GM12878 (cell line): ENCODE measurements at regions of chr3 and their contacts with region 1.

Region 1: GRCh38 chr3:107855708-107856107 is 235.1 kb downstream of the CD47 start:
- DNase-seq: no peak
- ATAC-seq: peak; percentile 97
- H3K4me3 ChIP-seq: no peak overlapping the region
- H3K27ac ChIP-seq: no peak overlapping the region
- H3K4me1 ChIP-seq: no peaks in the 10 kb centered on the region; the same call in 1 of the 2 replicates
- H3K27me3 ChIP-seq: no peaks in the 10 kb centered on the region
- CTCF ChIP-seq: peak; percentile 37 to 46 (median 41); a peak in 3 of 6 replicates
- EP300 ChIP-seq: no peak
- POLR2A ChIP-seq: no peak
- RAD21 ChIP-seq: 0 out of 2 replicates have a peak, but pooled peaks have one; percentile 18

Region 2: DNA sequence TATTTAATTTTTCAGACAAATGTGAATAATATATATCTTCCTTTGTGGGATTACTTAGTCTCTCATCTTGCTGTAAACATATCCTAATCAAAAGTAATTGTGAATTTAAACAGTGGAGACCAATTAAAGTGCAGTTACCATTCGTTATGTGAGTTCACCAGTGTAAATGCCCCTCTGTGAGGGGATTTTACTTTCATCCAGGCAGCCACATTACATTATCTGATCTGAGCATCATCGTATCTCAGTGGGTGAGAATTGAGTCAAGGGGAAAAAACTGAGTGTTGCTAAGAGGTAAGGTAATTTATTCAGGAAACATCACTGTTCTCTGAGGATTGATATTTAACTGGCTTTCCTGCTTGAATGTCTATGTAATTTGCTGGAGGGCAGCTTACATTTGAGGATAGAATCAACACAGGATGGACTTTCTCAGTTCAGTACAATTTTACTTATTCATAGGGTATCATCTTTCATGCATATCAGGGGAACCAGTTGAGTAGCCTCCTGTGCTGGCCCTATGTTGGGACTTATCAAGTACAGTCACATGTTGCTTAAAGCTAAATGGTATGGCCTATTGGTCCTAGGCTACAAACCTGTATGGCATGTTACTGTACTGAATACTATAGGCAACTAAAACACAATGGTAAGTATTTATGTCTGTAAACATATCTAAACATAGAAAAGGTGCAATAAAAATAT is 15.4 kb after region 1 on chr3:
- CTCF ChIA-PET with region 1: interaction called, 17 read pairs
- POLR2A ChIA-PET with region 1: no interaction called
- RAD21 ChIA-PET with region 1: interaction called, 4 read pairs
- SMC1A ChIA-PET with region 1: interaction called, 18 read pairs
- in situ Hi-C with region 1: no loop called
- intact Hi-C with region 1: no loop called
- DNase-seq: no peak
- ATAC-seq: peak; percentile 89
- H3K4me3 ChIP-seq: no peak overlapping the region
- H3K27ac ChIP-seq: no peak overlapping the region
- H3K4me1 ChIP-seq: no peaks in the 10 kb centered on the region
- H3K27me3 ChIP-seq: no peaks in the 10 kb centered on the region
- CTCF ChIP-seq: no peak
- EP300 ChIP-seq: no peak
- POLR2A ChIP-seq: no peak
- RAD21 ChIP-seq: no peak

Region 3: DNA sequence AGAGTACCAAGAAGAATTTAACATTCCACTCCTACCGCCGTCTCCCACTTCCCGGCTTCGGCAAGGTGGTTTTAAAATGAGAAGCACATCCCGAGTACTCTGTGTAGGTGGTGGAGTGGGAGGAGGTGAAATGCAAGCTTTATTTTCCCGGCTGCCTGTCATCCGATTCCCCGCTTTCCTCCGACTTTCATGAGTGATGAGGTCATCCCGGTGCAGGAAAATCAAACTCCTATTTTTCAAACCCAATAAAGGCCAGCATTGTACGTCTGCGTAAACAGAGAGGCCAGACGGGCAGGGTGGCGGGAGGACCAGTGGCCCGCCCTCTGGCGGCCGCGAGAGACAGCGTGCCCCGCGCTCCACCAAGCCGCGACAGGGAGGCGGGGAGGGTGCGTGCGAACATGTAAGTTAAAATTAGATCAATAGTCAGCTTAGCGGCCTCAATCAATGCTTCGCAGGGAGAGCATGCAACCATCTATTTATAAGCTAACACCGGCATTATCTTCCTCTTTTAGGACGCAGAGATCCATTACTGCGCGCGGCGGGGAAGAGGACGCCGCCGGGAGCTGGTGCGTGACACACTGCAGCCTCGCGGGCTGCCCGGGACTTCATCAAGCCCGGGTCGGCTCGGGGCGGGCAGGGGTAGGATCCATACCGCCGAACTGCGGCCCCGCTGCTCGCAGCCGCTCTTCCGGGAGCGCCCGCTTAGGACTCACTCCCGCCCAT is 71.8 kb after region 1 on chr3:
- CTCF ChIA-PET with region 1: interaction called, 6 read pairs
- POLR2A ChIA-PET with region 1: no interaction called
- RAD21 ChIA-PET with region 1: interaction called, 5 read pairs
- SMC1A ChIA-PET with region 1: interaction called, 6 read pairs
- in situ Hi-C with region 1: no loop called
- intact Hi-C with region 1: loop called (anchors 5 kb)
- DNase-seq: no peak
- ATAC-seq: peak; percentile 99
- H3K4me3 ChIP-seq: peak overlapping the region; percentile 57; the same call in 1 of the 2 replicates
- H3K27ac ChIP-seq: no peak overlapping the region
- H3K4me1 ChIP-seq: peaks cover 3% of the 10 kb centered on the region; the same call in 1 of the 2 replicates
- H3K27me3 ChIP-seq: peaks cover 0 to 5% of the 10 kb centered on the region in 2 experiments; a peak in 3 of 4 replicates
- CTCF ChIP-seq: peak; percentile 77 to 93 (median 91)
- EP300 ChIP-seq: no peak
- POLR2A ChIP-seq: no peak
- RAD21 ChIP-seq: peak; percentile 60

Region 4: DNA sequence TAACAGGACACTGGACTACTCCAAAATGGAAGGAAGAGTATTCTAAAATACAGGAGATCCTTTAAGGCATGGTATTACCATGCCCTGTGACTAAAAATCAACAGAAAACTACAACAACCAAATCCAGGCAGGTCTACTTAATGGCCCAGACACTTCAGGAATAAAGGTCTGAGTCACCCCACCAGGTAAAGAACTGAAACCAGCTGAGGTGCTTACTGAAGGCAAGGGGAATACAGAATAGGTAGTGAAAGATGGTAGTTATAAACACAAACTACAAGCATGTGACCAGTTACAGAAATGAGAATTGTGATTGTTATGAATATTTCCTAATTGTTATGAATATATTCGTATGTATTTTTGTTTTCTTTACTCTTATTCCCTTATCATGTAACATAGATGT is 353.1 kb after region 1 on chr3:
- CTCF ChIA-PET with region 1: no interaction called
- POLR2A ChIA-PET with region 1: no interaction called
- RAD21 ChIA-PET with region 1: no interaction called
- SMC1A ChIA-PET with region 1: no interaction called
- in situ Hi-C with region 1: no loop called
- intact Hi-C with region 1: no loop called
- DNase-seq: peak; percentile 30
- ATAC-seq: peak; percentile 96
- H3K4me3 ChIP-seq: no peak overlapping the region
- H3K27ac ChIP-seq: no peak overlapping the region
- H3K4me1 ChIP-seq: peaks cover 7% of the 10 kb centered on the region; the same call in 1 of the 2 replicates
- H3K27me3 ChIP-seq: no peaks in the 10 kb centered on the region
- CTCF ChIP-seq: no peak
- EP300 ChIP-seq: peak in 1 of 2 experiments; percentile 62; a peak in 2 of 4 replicates
- POLR2A ChIP-seq: no peak
- RAD21 ChIP-seq: no peak